AG04449 (cell line): ENCODE measurements at regions of chr1 and their contacts with region 1.

Region 1: GRCh38 chr1:28248283-28249012 is 10.9 kb upstream of the SESN2 start:
- DNase-seq: no peak
- H3K4me3 ChIP-seq: peak overlapping the region; percentile 2; the same call in 1 of the 2 replicates
- CTCF ChIP-seq: peak; percentile 83

Region 2: GRCh38 chr1:27970401-27970800 is 278.0 kb before region 1 on chr1:
- CTCF ChIA-PET with region 1: no interaction called
- POLR2A ChIA-PET with region 1: no interaction called
- DNase-seq: peak; percentile 66
- H3K4me3 ChIP-seq: no peak overlapping the region
- CTCF ChIP-seq: no peak

Region 3: DNA sequence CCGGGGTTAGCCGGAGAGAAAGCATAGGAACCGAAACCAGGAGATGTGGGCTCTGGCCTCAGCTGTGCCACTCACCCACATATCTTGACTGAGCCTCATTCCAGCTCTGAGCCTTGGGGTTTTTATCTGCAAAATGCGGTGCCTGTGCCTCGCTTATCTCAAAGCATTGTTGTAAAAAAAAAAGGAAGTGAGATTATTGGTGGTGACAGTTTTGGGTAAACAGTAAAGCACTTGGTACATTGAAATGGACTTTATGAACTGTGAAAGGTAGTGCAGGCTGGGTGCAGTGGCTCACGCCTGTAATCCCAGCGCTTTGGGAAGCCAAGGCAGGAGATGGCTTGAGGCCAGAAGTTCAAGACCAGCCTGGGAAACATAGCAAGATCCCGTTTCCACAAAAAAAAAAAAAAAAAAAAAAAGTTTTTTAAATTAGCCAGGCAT is 75.7 kb before region 1 on chr1:
- CTCF ChIA-PET with region 1: no interaction called
- POLR2A ChIA-PET with region 1: no interaction called
- DNase-seq: no peak
- H3K4me3 ChIP-seq: no peak overlapping the region
- CTCF ChIP-seq: no peak

Region 4: DNA sequence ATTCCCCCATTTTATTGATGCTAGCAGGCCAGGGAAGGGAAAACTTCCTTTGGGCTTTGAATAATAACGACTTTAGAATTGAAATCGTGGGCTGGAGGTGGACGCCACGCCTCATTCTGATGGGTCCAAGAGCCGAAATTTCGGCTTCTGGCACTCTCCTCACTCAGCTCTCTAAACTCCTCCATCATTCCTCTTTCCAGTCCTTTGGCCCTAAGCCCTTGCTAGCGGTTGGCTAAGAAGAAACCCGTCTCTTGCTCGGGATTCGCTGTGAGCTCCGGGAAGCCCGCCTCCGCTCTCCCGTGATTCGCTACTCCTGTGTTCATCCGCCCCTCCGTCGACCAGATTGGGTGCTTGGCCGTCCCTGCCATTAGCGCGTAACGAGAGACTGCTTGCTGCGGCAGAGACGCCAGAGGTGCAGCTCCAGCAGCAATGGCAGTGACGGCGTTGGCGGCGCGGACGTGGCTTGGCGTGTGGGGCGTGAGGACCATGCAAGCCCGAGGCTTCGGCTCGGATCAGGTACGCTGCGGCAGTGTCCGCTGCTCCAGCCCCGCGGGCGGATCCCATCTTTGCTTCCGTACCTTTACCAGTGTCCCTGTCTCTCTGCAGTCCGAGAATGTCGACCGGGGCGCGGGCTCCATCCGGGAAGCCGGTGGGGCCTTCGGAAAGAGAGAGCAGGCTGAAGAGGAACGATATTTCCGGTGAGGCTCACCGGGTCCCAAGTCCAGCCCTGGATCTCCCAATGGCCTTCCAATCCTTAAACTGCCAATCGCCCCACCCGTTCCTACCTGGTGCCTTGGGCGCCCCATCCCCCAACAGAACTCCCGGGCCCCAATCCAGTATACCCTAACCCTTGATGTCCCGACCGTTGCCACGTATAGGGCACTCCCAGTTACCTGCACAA is 12.4 kb before region 1 on chr1 and contains the start of gene ATP5IF1:
- CTCF ChIA-PET with region 1: interaction called, 18 read pairs
- POLR2A ChIA-PET with region 1: interaction called, 14 read pairs
- DNase-seq: peak; percentile 90
- H3K4me3 ChIP-seq: peak within 1 kb of the TSS; percentile 100
- CTCF ChIP-seq: no peak

Region 5: GRCh38 chr1:28273216-28273860 is 24.9 kb after region 1 on chr1:
- CTCF ChIA-PET with region 1: interaction called, 15 read pairs
- POLR2A ChIA-PET with region 1: no interaction called
- DNase-seq: no peak
- H3K4me3 ChIP-seq: no peak overlapping the region
- CTCF ChIP-seq: no peak

Region 6: GRCh38 chr1:28329395-28330153 is 81.1 kb after region 1 on chr1:
- CTCF ChIA-PET with region 1: interaction called, 18 read pairs
- POLR2A ChIA-PET with region 1: interaction called, 4 read pairs
- DNase-seq: no peak
- H3K4me3 ChIP-seq: peak overlapping the region; percentile 65
- CTCF ChIP-seq: no peak

Region 7: GRCh38 chr1:28510665-28511440 is 262.4 kb after region 1 on chr1:
- CTCF ChIA-PET with region 1: interaction called, 7 read pairs
- POLR2A ChIA-PET with region 1: interaction called, 15 read pairs
- DNase-seq: no peak
- H3K4me3 ChIP-seq: no peak overlapping the region; the same call in none of the 2 replicates
- CTCF ChIP-seq: no peak